ENCODE measurements at regions of chr6 and their contacts with region 1.

Region 1: DNA sequence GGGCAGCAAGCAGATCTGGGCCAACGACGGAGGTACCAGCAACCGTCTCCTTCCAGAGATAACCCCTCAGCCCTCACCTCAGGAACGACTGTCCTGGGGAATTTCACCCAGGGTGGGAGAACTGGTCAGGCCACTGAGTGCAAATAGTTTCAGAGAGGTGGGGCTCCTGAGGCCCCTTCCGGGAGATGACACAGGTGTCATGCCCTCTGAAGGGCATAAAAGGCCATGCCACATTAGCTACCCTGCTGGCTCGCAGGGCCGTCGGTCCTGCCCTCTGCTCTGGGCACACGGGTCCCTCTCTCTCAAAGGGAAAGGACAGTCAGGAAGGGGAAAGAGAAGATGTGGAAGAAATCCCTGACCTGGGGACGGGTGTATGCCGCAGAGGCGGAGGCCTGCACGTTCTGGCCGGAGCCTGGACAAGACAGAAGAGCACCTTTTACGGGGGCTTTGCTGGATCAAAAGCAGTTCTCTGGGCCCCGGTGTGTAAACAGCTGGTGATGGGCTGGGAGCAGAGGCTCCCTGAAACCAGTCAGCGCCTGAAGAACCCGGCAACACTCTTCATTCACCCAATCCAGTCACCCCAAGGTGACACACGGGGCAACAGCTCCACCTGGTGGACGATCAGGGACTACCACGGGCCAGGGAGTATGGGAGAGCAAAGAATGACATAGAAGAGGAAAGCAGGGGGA is 6.4 kb upstream of the TAF8 start:
- DNase-seq: peak; percentile 84
- CTCF ChIP-seq: peak; percentile 91

Region 2: GRCh38 chr6:41787219-41787917 is 256.6 kb before region 1 on chr6 and contains the start of gene TOMM6:
- in situ Hi-C with region 1: loop called (anchors 10 kb)
- DNase-seq: peak; percentile 94
- CTCF ChIP-seq: peak; percentile 87

Region 3: GRCh38 chr6:41846666-41847237 is 197.2 kb before region 1 on chr6:
- in situ Hi-C with region 1: loop called (anchors 10 kb)
- DNase-seq: peak; percentile 65
- CTCF ChIP-seq: peak; percentile 73

Region 4: GRCh38 chr6:41920921-41921711 is 122.8 kb before region 1 on chr6 and contains the starts of genes BYSL and MED20:
- in situ Hi-C with region 1: loop called (anchors 10 kb)
- DNase-seq: peak; percentile 96
- CTCF ChIP-seq: peak; percentile 87

Region 5: GRCh38 chr6:41976794-41977484 is 67.0 kb before region 1 on chr6:
- in situ Hi-C with region 1: no loop called
- DNase-seq: peak; percentile 37
- CTCF ChIP-seq: no peak

Measured in GM13977 (cell line).